Breast epithelium (tissue), 4 donors: ENCODE measurements at regions of chr3 and their contacts with region 1.

Region 1: DNA sequence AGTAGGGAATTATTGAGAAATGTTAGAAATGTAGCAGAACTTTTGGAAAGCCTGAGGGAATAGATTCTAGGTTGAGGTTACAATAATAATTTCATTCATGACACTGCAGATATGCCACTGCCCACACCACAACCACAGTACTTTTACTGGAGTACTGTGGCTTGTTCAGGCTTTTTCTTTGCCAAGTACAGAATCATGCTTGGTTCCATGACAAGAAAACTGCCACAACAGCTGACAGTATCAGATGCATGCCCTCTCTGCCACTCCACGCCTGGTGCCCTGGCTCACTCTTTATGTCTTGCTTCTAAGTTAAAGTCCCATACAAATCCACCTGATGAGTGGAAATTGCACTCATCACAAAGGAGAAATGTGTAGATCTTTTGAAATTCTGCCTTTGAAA is 398.6 kb downstream of the ZIC1 start:
- DNase-seq: no peak
- H3K4me3 ChIP-seq: no peak overlapping the region
- H3K27ac ChIP-seq: no peak overlapping the region
- H3K4me1 ChIP-seq: no peaks in the 10 kb centered on the region
- H3K27me3 ChIP-seq: no peaks in the 10 kb centered on the region
- CTCF ChIP-seq: no peak
- POLR2A ChIP-seq: no peak

Region 2: GRCh38 chr3:146020986-146021385 is 1786.8 kb before region 1 on chr3:
- intact Hi-C with region 1: loop called (anchors 10 kb)
- DNase-seq: no peak
- H3K4me3 ChIP-seq: no peak overlapping the region
- H3K27ac ChIP-seq: no peak overlapping the region
- H3K4me1 ChIP-seq: no peaks in the 10 kb centered on the region
- H3K27me3 ChIP-seq: no peaks in the 10 kb centered on the region
- CTCF ChIP-seq: no peak
- POLR2A ChIP-seq: no peak